Calu3 (cell line): ENCODE measurements at regions of chr19 and their contacts with region 1.

Region 1: DNA sequence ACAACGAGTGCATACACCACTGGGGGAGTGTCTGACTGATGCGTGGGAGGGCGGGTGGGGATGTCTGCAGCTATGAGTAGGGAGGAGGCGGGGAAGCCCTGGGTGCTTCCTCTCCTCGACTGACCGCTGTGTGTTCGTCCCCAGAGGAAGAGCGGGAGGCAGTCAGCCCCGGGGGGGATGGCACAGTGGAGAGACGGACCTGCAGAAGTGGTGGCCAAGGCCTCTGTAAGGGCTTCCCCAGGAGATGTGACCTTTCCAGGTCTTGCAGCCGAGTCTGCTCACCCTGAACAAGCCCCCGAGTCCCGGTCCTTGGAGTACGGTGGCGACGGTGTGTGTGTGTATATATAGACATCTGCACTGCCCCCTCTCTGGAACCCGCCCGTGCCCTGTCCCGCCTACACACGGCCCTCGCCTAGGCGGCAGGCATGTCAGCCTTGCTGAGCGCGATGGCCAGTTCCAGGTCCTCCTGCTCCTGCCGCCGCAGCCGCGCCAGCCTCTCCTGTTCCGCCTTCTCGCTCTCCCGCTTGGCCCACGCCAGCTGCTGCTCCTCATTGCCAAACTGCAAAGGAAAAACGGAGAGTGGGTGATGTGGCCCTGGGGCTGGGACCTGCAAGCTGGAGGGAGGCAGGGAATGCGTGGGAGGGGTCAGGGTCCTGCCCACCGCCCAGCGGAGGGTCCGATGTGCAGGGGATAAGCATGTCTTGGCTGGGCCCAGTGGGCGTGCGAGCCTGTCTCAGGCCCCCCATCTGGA is 30.8 kb downstream of the KLF2 start:
- DNase-seq: no peak
- H3K4me3 Mint-ChIP-seq: no peak overlapping the region
- H3K27ac Mint-ChIP-seq: no peak overlapping the region
- H3K4me1 Mint-ChIP-seq: no peaks in the 10 kb centered on the region
- H3K27me3 Mint-ChIP-seq: no peaks in the 10 kb centered on the region
- CTCF ChIP-seq: no peak

Region 2: GRCh38 chr19:16327911-16328823 is 27.3 kb before region 1 on chr19:
- CTCF ChIA-PET with region 1: no interaction called
- intact Hi-C with region 1: no loop called
- DNase-seq: no peak
- H3K4me3 Mint-ChIP-seq: no peak overlapping the region
- H3K27ac Mint-ChIP-seq: no peak overlapping the region
- H3K4me1 Mint-ChIP-seq: peaks cover 8% of the 10 kb centered on the region
- H3K27me3 Mint-ChIP-seq: no peaks in the 10 kb centered on the region
- CTCF ChIP-seq: no peak

Region 3: DNA sequence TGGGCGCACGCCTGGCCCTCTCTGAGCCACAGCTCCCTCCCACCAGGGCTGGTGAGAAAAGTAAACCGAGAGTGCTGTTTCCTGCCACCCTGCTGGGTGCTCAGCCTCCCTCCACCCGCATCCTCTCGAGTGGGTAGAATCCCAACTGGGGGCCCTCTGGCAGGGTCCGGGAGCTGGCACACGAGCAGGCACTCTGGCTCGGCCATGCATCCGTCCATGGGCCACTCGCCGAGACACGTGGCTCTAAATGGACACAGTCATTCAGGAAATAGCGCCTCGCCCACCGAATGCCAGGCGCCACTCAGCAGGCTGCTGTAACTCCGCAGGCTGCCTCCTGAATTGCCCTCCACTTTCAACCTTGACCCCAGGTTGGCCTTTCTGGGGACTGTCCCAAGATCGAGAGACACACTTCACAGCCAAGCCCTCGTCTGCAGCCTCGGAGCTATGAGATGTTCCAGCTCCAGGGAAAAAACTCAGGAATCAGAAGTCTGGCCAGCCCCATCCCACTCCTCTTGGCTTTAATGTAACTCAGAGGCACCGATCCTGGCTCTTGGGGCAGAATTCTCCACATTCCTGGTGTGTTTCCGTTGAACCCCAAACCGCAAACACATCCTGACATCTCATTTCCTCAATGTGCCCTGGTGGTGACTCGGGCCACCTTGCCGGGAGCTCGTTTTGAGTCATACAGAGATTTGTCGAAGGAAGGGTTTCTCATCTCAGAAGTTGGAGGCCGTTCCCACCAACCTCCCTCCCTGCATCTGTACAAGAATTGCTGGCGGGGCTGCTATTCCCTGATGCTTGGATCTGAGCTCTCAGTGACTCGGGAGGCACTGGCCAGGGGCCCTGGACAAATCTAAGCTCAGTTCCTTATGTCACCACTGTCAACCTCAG is 16.8 kb before region 1 on chr19:
- CTCF ChIA-PET with region 1: interaction called, 10 read pairs
- intact Hi-C with region 1: no loop called
- DNase-seq: peak; percentile 57
- H3K4me3 Mint-ChIP-seq: no peak overlapping the region
- H3K27ac Mint-ChIP-seq: peak overlapping the region; percentile 50
- H3K4me1 Mint-ChIP-seq: peaks cover 8% of the 10 kb centered on the region
- H3K27me3 Mint-ChIP-seq: no peaks in the 10 kb centered on the region
- CTCF ChIP-seq: no peak